ENCODE measurements at regions of chr15 and their contacts with region 1.

Region 1: DNA sequence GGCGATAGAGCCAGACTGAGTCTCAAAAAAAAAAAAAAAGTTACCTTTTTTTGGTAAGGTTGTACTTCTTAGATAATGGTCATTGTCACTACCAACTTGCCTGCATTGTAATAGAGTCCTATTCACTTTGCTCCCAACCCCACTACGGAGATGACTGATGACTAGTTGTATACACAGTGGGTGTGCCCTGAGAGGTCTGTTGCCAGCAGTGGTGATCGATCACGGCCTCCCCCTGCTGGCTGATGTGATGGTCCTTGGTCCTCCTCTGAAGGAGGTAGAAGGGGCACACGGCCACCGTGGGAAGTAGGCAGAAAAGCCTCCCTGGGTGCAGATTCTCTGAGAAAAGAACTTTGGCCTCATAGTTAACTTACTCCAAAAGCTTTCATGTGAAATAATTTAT is 10.7 kb downstream of the GCNT3 start:
- DNase-seq: peak; percentile 73
- CTCF ChIP-seq: peak; percentile 64

Region 2: DNA sequence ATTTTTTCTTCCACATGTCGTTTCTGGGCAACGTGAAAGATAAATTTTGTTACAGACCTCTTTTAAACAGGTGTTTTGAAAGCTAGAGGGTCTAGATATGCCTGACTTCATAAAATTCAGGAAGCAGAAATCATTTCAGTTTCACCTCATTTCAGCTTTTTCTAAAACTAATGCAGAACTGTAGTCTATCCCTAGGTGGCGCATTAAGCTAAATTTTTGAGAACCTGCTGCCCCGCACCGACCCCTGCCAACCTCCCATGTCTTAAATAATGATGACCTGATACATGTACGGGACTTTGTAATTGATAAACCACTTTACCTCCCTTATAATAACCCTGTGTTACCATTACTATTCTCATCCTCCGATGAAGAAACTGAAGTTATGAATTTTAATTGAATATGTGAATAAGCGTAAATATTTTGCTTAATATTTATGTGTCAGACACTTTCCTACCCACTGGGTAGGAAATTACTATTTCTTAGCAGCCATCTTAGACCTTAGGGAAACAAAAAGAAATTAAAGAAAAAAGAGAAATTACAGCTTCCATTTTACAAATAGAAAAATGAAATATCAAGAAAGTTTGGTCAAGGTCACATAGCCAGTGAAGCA is 89.4 kb before region 1 on chr15:
- in situ Hi-C with region 1: loop called (anchors 10 kb)
- DNase-seq: peak; percentile 26
- CTCF ChIP-seq: peak; percentile 66

Measured in GM13977 (cell line).